Heart right ventricle (tissue), 16 donors: ENCODE measurements at regions of chr1 and their contacts with region 1.

Region 1: DNA sequence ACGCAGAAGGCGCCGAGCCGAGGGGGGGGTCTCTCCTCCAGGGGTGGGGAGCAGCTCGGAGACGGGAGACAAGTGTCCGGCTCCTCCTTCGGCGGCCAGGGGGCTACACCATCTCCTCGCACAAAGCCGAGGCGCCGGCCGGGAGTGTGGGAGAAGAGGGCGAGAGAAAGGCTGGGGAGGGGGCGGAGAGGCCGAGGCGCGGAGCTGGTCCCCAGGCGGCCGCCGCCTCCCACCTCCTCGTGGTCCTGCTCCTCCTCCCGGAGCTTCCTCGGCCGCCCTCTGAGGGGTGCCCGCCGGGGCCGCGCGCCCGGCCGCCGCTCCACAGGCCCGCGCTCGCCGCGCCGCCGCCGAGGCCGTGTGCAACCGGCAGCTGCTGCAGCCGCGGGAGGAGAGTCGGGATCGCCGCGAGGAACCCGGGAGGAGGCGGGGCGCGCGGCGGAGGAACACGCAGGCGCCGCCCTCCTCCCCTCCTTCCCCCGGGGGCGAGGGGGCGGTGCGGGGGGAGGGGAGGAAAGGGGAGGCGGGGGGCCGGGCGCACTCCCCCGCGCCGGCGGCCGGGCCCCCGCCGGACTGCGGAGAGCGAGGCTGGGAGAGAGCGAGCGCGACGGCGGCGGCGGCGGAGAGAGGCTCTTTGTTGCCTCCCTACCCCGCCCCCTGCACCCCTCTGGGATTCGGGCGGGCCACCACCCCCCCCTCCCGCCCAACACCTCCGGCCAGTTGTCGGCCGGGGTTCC is at the start of gene ENAH:
- DNase-seq: peak; percentile 84 to 87
- ATAC-seq: peak; percentile 79 to 90 (median 88)
- H3K4me3 ChIP-seq: peak within 1 kb of the TSS; percentile 86 to 99 (median 94)
- H3K27ac ChIP-seq: peak within 1 kb of the TSS; percentile 95 to 100 (median 98)
- H3K4me1 ChIP-seq: peaks cover 0 to 59% (median 45%) of the 10 kb centered on the region in 9 donors
- H3K27me3 ChIP-seq: peaks cover 0 to 50% (median 0%) of the 10 kb centered on the region in 7 donors
- CTCF ChIP-seq: no peak
- total RNA-seq, gene ENAH: 63.3 to 201 (median 115) TPM

Region 2: DNA sequence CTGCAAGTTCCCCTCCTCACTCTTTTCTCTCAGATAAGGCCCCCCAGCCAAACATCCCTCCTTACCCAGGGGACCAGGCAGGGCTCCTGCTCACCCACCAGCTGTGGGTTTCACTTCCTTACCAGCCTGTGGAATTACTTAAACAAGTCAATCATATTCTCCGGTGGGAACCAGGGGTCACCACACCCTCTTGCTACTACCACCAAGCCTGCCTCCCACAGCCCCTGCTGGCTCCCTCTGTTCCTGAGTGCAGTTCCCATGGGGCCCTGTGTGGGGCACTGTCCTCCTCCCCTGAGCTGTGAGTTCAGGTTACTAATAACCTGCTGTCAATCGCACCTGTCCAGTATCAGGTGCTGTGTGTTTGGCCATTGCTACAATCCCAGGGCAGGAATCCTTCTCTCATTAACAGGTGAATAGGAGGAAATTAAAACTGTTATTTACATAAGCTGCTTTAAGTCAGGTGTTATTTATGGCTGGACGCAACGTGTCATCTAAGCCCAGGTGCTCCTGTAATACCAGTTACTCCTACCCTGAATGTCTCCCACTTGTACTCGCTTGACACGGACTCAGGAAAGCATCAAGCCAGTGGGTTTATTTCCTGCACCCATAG is 172.0 kb before region 1 on chr1:
- intact Hi-C with region 1: loop called in 4 of 10 experiments (anchors 5 to 10 kb)
- DNase-seq: peak in 1 of 2 donors; percentile 35
- ATAC-seq: peak in 6 of 8 donors; percentile 25 to 51 (median 36)
- H3K4me3 ChIP-seq: no peak overlapping the region
- H3K27ac ChIP-seq: no peak overlapping the region
- H3K4me1 ChIP-seq: peaks cover 0 to 10% (median 0%) of the 10 kb centered on the region in 9 donors
- H3K27me3 ChIP-seq: no peaks in the 10 kb centered on the region
- CTCF ChIP-seq: peak; percentile 28 to 76 (median 69)

Region 3: GRCh38 chr1:225559326-225559725 is 93.6 kb before region 1 on chr1:
- intact Hi-C with region 1: loop called in 5 of 10 experiments (anchors 5 to 10 kb)
- DNase-seq: no peak
- ATAC-seq: no peak
- H3K4me3 ChIP-seq: no peak overlapping the region
- H3K27ac ChIP-seq: no peak overlapping the region
- H3K4me1 ChIP-seq: peaks cover 0 to 8% (median 0%) of the 10 kb centered on the region in 9 donors
- H3K27me3 ChIP-seq: no peaks in the 10 kb centered on the region
- CTCF ChIP-seq: no peak

Region 4: GRCh38 chr1:225603538-225604354 is 49.1 kb before region 1 on chr1:
- intact Hi-C with region 1: loop called in 2 of 10 experiments (anchors 2 to 5 kb)
- DNase-seq: no peak
- ATAC-seq: peak in 5 of 8 donors; percentile 42 to 74 (median 63)
- H3K4me3 ChIP-seq: no peak overlapping the region
- H3K27ac ChIP-seq: peak overlapping the region in 9 of 10 donors; percentile 20 to 66 (median 40)
- H3K4me1 ChIP-seq: peaks cover 11 to 69% (median 43%) of the 10 kb centered on the region in 9 donors
- H3K27me3 ChIP-seq: no peaks in the 10 kb centered on the region
- CTCF ChIP-seq: no peak

Region 5: DNA sequence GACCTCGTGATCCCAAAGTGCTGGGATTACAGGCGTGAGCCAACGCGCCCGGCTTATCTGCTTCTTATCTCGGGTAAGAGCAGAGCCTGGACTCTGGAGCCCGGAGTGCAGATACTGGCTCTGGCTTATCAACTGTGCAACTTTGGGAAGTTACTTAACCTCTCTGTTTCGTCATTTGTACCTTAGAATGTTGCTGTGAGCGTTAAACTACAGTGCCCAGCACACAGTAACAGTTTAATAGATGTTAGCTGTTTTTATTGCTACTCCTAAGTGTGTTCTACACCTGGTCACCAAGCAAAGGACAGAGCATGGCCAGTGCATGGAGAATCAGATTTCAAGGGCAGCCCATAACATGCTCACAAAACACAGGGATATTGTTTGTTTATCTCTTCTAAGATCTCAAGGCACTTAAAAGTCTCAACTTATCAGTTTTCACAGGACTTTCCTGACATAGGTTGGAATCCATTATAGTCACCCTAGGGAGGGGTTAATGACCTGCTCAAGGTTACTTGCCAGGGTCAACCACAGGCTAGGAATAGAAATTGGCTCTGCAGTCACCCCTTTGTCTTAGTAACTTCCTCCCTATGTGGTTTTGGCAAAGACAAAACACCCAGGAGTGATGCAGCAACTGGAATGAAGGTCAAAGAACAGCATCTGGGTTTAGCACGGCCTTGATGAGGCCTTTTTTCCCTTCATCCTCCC is 102.2 kb after region 1 on chr1:
- intact Hi-C with region 1: loop called in 3 of 10 experiments (anchors 5 to 10 kb)
- DNase-seq: peak; percentile 56 to 64
- ATAC-seq: peak; percentile 78 to 95 (median 88)
- H3K4me3 ChIP-seq: no peak overlapping the region
- H3K27ac ChIP-seq: peak overlapping the region; percentile 10 to 91 (median 79)
- H3K4me1 ChIP-seq: peaks cover 15 to 80% (median 52%) of the 10 kb centered on the region in 9 donors
- H3K27me3 ChIP-seq: no peaks in the 10 kb centered on the region
- CTCF ChIP-seq: no peak

Region 6: DNA sequence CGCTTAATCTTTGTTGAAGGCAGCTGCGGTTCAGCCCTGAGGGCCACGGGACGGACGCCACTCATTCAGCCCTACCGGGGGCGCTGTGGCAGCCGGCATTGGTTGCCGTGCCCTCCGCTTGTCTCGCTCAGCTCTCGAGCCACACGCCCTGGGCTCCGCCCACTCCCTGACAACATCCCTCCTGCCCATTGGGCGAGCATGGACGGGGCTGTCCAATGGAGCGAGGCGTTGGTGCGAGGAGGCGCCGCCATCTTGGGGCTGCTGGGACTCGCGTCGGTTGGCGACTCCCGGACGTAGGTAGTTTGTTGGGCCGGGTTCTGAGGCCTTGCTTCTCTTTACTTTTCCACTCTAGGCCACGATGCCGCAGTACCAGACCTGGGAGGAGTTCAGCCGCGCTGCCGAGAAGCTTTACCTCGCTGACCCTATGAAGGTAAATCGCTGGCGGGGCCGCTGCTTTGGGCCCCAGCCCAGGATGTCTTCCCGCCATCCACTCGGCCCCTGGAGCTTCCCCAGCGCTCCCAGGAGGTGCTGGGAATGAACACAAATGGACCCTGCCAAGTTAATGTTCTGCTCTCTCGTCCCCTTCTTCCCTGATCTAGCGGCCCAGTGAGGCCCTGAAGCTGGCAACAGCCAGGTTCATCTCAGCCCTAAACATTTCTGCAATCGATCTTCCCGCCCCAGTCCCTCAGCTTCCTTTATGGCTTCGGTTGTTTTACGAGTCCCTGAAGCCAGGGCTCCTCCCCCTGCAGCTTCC is 124.9 kb after region 1 on chr1 and contains the start of gene SRP9:
- intact Hi-C with region 1: loop called in 6 of 10 experiments (anchors 2 to 5 kb)
- DNase-seq: peak; percentile 99
- ATAC-seq: peak; percentile 100
- H3K4me3 ChIP-seq: peak within 1 kb of the TSS; percentile 61 to 97 (median 71)
- H3K27ac ChIP-seq: peak within 1 kb of the TSS; percentile 61 to 97 (median 94)
- H3K4me1 ChIP-seq: peaks cover 6 to 66% (median 55%) of the 10 kb centered on the region in 9 donors
- H3K27me3 ChIP-seq: no peaks in the 10 kb centered on the region
- CTCF ChIP-seq: peak; percentile 85 to 98 (median 92)
- total RNA-seq, gene SRP9: 165 to 199 (median 175) TPM

Region 7: GRCh38 chr1:225845571-225846259 is 192.8 kb after region 1 on chr1:
- intact Hi-C with region 1: no loop called
- DNase-seq: peak; percentile 78 to 81
- ATAC-seq: peak; percentile 77 to 88 (median 81)
- H3K4me3 ChIP-seq: no peak overlapping the region
- H3K27ac ChIP-seq: peak overlapping the region in 6 of 10 donors; percentile 12 to 38 (median 24)
- H3K4me1 ChIP-seq: peaks cover 0 to 40% (median 17%) of the 10 kb centered on the region in 9 donors
- H3K27me3 ChIP-seq: no peaks in the 10 kb centered on the region
- CTCF ChIP-seq: peak; percentile 57 to 81 (median 75)